Dendritic cell treated with granulocyte-macrophage colony-stimulating factor and Interleukin-4, amounts not matched to agents 40 ng/mL and 50 ng/mL, for 4 days (primary cell): ENCODE measurements at regions of chr19 and their contacts with region 1.

Region 1: GRCh38 chr19:4815426-4816201 is 15.9 kb downstream of the TICAM1 start:
- H3K4me3 Mint-ChIP-seq: peak overlapping the region; percentile 76
- H3K27ac Mint-ChIP-seq: peak overlapping the region; percentile 80
- H3K4me1 Mint-ChIP-seq: peaks cover 62% of the 10 kb centered on the region
- H3K27me3 Mint-ChIP-seq: no peaks in the 10 kb centered on the region

Region 2: DNA sequence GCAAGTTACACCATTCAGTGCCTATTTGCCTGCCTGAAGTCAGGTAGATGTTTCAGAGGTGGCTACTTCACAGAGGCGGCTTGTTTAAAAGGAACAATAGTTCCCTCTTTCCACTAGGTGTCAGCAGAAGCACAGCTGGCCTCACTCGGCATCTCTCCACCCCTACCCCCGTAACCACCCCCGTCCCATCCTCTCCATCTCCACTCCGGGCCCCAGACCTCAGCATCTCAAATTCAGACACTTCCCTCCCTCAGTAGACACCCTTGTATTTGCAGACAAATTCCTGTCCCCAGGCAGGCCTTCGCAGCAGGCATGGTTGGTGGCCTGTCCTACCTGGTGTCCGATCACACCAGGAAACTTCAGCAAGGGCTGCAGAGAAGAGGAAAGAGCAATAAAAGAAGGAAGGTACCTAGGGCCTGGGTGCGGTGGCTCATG is 82.9 kb before region 1 on chr19:
- intact Hi-C with region 1: no loop called
- H3K4me3 Mint-ChIP-seq: no peak overlapping the region
- H3K27ac Mint-ChIP-seq: no peak overlapping the region
- H3K4me1 Mint-ChIP-seq: peaks cover 15% of the 10 kb centered on the region
- H3K27me3 Mint-ChIP-seq: peaks cover 32% of the 10 kb centered on the region

Region 3: DNA sequence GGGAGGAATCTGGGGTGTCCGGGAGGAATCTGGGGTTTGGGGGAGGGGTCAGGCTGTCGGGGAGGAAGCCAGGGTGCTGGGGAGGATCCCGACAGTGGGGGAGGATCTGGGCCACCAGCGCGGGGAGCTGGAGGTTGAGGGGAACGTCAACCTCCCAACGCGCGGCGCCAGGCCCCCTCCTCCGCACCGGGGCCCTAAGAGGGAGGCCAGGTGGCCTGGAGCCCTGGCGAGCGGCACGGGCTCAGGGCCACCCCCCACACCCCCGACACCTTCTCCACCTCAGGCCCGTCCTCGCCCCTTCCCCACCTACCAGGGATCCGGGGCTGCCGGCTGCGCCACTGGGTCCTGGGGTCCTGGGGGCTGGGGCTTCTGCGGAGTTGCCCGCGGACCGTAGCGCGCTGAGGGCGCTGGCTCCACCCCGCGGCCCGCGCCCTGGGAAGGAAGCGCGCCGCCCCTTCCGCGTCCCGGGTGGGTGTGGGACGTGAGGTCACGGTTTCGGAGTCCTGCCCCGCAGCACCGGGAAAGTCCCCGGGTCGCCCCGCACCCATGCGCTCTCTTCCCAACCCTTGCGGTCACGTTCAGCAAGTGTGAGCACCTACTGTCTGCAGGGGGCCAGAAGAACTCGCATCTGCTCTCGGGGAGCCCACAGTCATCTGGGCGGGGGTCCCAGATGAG is 15.8 kb after region 1 on chr19 and contains the start of gene TICAM1:
- intact Hi-C with region 1: loop called (anchors 2 kb)
- H3K4me3 Mint-ChIP-seq: peak within 1 kb of the TSS; percentile 94
- H3K27ac Mint-ChIP-seq: peak within 1 kb of the TSS; percentile 93
- H3K4me1 Mint-ChIP-seq: peaks cover 43% of the 10 kb centered on the region
- H3K27me3 Mint-ChIP-seq: no peaks in the 10 kb centered on the region

Region 4: DNA sequence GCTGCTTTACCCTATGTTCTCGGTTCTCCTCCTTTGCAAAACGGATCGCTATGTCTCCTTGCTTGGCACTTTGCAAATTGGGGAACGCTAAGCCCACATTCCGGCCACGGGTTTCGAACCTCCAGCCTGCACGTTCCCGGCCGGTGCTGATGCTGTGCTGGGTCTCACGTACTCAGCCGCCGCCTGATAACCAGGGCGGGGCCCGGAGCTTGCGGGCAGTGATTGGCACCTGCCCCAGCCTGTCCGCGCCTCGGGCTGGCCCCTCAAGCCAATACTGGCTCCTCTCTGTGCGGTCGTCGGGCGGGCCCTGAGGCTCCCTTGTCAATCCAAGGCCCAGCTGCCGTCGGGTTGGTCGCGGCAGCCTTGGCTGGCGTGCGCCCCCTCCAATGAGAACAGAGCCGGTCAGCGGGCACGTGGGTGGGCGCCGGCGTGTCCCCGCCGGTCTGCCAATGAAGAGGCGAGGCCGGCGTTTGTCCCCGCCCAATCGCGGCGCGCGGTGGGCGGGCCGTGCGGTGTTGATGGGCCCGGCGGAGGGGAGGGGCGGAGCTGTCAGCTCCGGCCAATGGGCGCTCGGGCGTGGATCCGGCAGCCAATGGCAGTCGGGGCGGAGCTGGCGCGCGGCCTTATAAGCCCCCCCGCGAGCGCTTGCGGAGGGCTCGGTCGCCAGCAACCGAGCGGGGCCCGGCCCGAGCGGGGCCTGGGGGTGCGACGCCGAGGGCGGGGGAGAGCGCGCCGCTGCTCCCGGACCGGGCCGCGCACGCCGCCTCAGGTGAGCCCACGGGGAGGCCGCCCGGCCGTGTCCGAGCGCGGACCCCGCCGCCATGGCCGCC is 153.1 kb after region 1 on chr19 and contains the start of gene KDM4B:
- intact Hi-C with region 1: no loop called
- H3K4me3 Mint-ChIP-seq: peak within 1 kb of the TSS; percentile 92
- H3K27ac Mint-ChIP-seq: peak within 1 kb of the TSS; percentile 86
- H3K4me1 Mint-ChIP-seq: peaks cover 46% of the 10 kb centered on the region
- H3K27me3 Mint-ChIP-seq: no peaks in the 10 kb centered on the region